H1 (cell line): ENCODE measurements at regions of chr12 and their contacts with region 1.

Region 1: DNA sequence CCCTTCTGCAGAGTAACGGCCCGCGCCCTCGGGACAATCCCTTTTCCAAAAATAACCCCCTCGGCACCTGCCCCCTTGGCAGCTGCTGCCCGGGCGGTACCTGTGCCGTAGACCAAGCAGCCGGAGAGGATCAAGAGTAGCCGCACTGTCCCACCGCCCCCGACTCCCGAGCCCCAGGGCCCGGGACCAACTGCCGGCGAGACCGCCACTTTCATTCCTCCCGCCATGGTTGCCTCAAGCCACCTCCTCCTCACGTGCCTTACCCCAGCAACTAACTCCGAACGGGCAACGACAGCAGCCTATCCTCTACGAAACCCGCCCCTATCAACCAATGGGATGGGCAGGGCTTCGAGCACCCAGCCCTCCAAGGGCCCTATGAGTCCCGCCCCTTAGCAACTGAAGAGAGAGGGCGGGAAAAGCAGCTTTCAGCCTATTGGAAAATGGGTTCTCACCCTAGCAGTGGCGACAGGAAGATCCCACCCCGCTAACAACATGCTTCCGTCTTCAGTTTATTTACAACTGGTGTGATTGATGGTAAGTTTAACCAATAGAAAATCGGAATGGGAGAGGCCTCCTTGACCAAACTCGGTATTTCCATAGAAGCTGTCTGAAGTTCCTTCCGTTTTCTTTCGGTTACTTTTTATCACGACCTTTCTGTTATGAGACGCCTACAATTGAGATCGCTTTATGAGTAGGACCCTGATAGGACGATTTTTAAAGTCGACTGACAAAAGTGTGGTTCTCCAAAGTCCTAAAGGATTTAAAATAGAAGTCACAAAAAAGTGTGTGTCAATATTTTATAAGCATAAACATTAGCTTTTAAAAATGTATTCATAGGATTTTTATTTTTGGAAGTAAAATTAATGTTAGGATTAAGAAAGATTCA is at the start of gene NEMP1:
- DNase-seq: peak; percentile 85 to 98
- H3K4me3 ChIP-seq: peak within 1 kb of the TSS; percentile 79 to 95 (median 87)
- H3K27ac ChIP-seq: peak within 1 kb of the TSS; percentile 43; the same call in 1 of the 2 replicates
- H3K4me1 ChIP-seq: peaks cover 0 to 3% (median 0%) of the 10 kb centered on the region in 4 experiments; a peak in 1 of 7 replicates
- H3K27me3 ChIP-seq: no peaks in the 10 kb centered on the region
- CTCF ChIP-seq: no peak
- EP300 ChIP-seq: no peak
- POLR2A ChIP-seq: peak; percentile 69 to 83
- RAD21 ChIP-seq: no peak
- total RNA-seq, gene NEMP1: 41.6 and 43.2 TPM in 2 replicates

Region 2: DNA sequence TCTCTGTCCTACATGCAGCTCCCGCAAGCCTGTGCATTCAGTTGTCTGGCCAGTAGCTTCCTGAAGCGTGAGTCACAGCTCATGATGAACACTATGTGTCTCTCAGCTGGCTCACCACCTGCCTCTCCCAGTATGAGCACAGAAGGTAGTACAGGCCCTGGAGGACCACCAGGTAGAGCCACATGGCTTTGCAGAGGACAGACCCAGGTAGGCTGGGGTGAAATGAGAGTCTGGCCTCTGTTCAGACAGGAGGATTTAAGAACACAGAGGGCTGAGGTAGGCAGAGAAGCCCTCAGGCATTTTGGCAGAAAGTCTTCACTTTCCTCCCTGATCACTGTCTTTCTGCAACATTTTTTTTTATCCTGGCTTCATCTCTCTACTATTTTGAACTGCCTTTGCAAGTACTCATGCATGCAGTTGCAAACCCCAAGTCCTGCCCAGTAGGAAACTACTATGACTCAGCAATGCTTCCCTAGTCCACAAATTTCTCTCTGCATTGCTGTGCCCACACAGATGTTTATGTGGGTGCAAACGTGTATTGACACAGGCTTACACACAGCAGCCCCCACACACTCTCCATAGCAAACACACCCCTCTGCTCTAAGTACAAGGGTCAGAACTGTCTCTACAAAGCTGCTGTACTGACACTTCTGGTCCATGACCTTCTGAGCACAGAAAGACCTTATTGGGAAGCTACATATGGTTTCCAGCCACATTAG is 137.3 kb before region 1 on chr12:
- CTCF ChIA-PET with region 1: no interaction called
- POLR2A ChIA-PET with region 1: no interaction called
- DNase-seq: peak in 1 of 2 experiments; percentile 23
- H3K4me3 ChIP-seq: no peak overlapping the region
- H3K27ac ChIP-seq: no peak overlapping the region
- H3K4me1 ChIP-seq: no peaks in the 10 kb centered on the region
- H3K27me3 ChIP-seq: no peaks in the 10 kb centered on the region
- CTCF ChIP-seq: no peak
- EP300 ChIP-seq: no peak
- POLR2A ChIP-seq: no peak
- RAD21 ChIP-seq: no peak

Region 3: DNA sequence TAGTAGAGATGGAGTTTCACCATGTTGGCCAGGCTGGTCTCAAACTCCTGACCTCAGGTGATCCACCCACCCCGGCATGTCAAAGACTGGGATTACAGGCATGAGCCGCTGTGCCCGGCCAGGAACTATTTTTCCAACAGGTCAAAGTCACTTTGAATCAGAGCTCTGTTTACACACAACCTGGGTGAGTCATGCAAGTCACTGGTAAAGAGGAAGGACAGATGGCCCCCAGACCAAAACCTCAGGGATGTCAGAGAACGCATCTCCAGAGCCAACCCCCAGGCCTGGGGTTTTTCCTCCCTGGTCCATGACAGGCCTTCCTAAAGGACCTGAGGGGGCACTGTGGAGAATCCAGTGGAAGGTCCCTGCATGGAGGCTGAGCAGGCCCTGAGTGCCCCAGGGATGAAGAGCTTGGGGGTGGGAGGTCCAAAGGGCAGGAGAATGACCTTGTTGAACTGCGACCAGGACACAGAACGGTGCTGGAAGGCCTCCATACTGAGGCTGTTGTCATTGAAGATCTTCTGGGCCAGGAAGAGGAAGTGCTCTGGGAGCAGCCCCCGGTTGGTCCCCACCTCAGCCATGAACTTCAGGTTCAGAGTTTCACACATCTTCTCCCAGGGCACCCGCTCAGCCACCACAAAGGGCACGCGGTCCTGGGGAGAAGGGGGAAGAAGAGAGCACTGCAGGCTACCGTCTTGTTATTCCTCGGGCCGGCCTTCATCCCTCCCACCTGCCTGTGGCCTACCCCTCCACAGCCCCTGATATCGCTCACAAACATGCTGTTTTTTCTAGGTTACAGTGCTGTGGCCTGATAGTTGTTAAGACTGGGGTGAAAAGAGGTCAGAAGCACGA is 23.3 kb after region 1 on chr12:
- CTCF ChIA-PET with region 1: interaction called, 225 read pairs
- POLR2A ChIA-PET with region 1: interaction called, 12 read pairs
- DNase-seq: no peak
- H3K4me3 ChIP-seq: no peak overlapping the region
- H3K27ac ChIP-seq: peak overlapping the region; percentile 19; the same call in 1 of the 2 replicates
- H3K4me1 ChIP-seq: no peaks in the 10 kb centered on the region
- H3K27me3 ChIP-seq: no peaks in the 10 kb centered on the region
- CTCF ChIP-seq: no peak
- EP300 ChIP-seq: no peak
- POLR2A ChIP-seq: no peak
- RAD21 ChIP-seq: no peak

Region 4: GRCh38 chr12:57166971-57167371 is 88.2 kb after region 1 on chr12:
- CTCF ChIA-PET with region 1: no interaction called
- POLR2A ChIA-PET with region 1: no interaction called
- DNase-seq: no peak
- H3K4me3 ChIP-seq: no peak overlapping the region
- H3K27ac ChIP-seq: no peak overlapping the region
- H3K4me1 ChIP-seq: no peaks in the 10 kb centered on the region
- H3K27me3 ChIP-seq: no peaks in the 10 kb centered on the region
- CTCF ChIP-seq: no peak
- EP300 ChIP-seq: no peak
- POLR2A ChIP-seq: no peak
- RAD21 ChIP-seq: no peak